HepG2 (cell line): ENCODE measurements at regions of chr6 and their contacts with region 1.

Region 1: DNA sequence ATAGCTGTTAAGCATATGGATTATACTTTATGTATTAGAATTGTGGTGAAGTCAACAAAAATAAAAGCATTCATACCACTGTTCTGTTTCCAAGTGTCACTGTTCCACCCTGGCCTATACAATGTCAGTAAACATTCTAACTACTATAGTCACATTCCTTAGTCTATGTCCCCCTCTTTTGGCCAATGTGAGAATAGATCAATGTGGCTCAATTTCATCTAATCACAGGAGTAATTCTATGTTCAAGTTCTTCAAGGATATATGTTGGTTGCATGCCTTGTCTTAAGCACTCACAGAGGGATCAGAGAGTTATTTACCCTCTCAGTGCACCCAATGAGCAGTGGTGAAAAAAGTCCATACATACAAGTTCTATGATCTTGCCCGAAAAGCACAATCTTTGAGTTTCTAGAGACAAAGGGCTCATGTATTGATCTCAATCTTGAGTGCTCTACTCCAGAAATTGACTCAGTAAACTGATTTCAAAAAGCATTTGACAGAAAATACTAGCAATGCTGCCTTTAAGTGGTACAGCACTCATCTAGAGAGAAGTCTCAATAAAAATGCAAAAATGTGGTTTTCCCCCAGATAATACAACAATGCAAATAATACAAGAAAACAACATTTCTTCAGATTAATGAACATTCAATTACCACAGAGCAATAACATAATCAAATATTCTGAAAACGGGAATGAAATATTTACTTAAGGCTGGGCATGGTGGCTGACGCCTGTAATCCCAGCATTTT is 16.5 kb downstream of the SMLR1 start:
- DNase-seq: peak; percentile 74
- ATAC-seq: peak; percentile 79
- H3K4me3 ChIP-seq: no peak overlapping the region
- H3K27ac ChIP-seq: no peak overlapping the region
- H3K4me1 ChIP-seq: peaks cover 23% of the 10 kb centered on the region
- H3K27me3 ChIP-seq: no peaks in the 10 kb centered on the region
- CTCF ChIP-seq: peak; percentile 91
- EP300 ChIP-seq: no peak
- POLR2A ChIP-seq: 0 out of 4 replicates have a peak, but pooled peaks of 1 of the 2 experiments have one; percentile 18
- RAD21 ChIP-seq: peak; percentile 89

Region 2: GRCh38 chr6:130293800-130294199 is 549.9 kb before region 1 on chr6:
- CTCF ChIA-PET with region 1: no interaction called
- POLR2A ChIA-PET with region 1: no interaction called
- in situ Hi-C with region 1: no loop called
- intact Hi-C with region 1: loop called (anchors 10 kb)
- DNase-seq: peak; percentile 23
- ATAC-seq: peak; percentile 89
- H3K4me3 ChIP-seq: no peak overlapping the region
- H3K27ac ChIP-seq: no peak overlapping the region
- H3K4me1 ChIP-seq: no peaks in the 10 kb centered on the region
- H3K27me3 ChIP-seq: no peaks in the 10 kb centered on the region
- CTCF ChIP-seq: peak; percentile 61
- EP300 ChIP-seq: no peak
- POLR2A ChIP-seq: no peak
- RAD21 ChIP-seq: no peak

Region 3: DNA sequence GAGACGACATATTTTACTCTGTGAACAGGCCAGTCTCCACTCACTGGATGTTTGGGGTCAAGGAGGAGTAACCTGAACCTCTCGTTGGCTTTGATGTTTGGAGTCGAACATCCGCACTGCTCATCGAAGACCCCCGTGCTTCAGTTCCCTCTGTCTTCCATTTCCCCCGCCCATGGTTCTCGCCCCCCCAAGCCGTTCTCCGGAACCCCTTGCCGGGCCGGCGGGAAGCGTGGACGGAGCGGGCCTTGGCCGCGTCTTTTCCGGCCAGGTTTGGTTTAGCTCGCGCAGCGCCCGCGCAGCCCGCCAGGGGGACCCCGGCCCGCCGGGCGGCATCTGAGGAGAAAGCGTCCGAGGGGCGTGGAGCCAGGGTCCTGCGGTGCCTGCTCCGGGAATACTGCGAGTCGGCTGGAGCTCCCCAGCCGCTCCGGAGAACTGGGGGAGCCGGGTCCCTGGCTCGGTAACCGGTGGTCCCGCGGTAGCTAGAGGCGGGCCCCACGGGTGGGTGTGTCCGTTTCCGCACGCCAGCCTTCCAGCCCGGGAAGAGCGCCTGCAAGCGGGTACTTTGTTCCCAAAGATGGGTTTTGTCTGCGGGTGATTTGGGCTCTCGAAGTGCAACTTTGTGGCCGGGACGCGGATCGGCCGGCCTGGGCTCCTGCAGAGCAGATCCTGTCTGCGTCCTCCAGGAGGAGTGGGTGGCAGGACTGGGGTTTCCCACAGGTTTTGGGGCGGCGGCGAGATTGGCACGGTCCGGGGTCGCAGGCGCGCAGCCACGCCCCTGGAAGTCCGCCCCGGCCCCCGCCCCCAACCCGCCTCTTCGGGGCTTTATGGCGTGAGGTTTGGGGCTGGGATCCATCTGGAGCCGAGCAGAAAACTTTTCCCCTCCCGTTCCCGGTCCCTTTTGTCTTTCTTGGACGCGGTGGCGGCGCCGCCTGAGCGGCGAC is 478.3 kb before region 1 on chr6 and contains the start of gene TMEM200A:
- CTCF ChIA-PET with region 1: interaction called, 16 read pairs
- POLR2A ChIA-PET with region 1: no interaction called
- in situ Hi-C with region 1: loop called (anchors 10 kb)
- intact Hi-C with region 1: loop called (anchors 1 kb)
- DNase-seq: peak; percentile 40
- ATAC-seq: peak; percentile 95
- H3K4me3 ChIP-seq: peak within 1 kb of the TSS; percentile 55 to 73 (median 56)
- H3K27ac ChIP-seq: no peak within 1 kb of the TSS
- H3K4me1 ChIP-seq: peaks cover 9% of the 10 kb centered on the region
- H3K27me3 ChIP-seq: peaks cover 2 to 34% of the 10 kb centered on the region in 2 experiments; a peak in 4 of 5 replicates
- CTCF ChIP-seq: peak; percentile 84
- EP300 ChIP-seq: no peak
- POLR2A ChIP-seq: no peak
- RAD21 ChIP-seq: peak; percentile 85
- total RNA-seq, gene TMEM200A: not detected in 2 replicates

Region 4: DNA sequence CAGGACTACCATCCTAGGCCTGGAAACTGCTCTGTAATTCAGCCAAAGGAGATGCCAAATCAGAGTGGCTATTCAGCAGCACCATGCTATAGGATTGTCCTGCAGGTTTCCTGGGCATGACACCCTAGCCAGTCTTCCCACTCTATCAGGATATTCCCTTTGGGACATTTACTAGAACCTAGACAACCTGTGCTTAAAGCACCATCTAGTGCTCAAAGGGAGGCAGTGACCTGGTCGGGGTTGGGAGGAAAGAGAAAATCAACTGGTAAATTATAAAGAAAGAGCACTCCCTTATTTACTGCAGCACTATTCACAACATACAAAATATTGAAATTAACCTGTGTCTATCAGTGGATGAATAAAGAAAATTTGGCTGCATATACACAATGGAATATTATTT is 83.7 kb before region 1 on chr6:
- CTCF ChIA-PET with region 1: no interaction called
- POLR2A ChIA-PET with region 1: no interaction called
- in situ Hi-C with region 1: no loop called
- intact Hi-C with region 1: loop called (anchors 1 kb)
- DNase-seq: peak; percentile 64
- ATAC-seq: peak; percentile 99
- H3K4me3 ChIP-seq: no peak overlapping the region
- H3K27ac ChIP-seq: no peak overlapping the region
- H3K4me1 ChIP-seq: no peaks in the 10 kb centered on the region
- H3K27me3 ChIP-seq: peaks cover 0 to 14% of the 10 kb centered on the region in 2 experiments; a peak in 2 of 5 replicates
- CTCF ChIP-seq: peak; percentile 77
- EP300 ChIP-seq: no peak
- POLR2A ChIP-seq: no peak
- RAD21 ChIP-seq: peak; percentile 79

Region 5: DNA sequence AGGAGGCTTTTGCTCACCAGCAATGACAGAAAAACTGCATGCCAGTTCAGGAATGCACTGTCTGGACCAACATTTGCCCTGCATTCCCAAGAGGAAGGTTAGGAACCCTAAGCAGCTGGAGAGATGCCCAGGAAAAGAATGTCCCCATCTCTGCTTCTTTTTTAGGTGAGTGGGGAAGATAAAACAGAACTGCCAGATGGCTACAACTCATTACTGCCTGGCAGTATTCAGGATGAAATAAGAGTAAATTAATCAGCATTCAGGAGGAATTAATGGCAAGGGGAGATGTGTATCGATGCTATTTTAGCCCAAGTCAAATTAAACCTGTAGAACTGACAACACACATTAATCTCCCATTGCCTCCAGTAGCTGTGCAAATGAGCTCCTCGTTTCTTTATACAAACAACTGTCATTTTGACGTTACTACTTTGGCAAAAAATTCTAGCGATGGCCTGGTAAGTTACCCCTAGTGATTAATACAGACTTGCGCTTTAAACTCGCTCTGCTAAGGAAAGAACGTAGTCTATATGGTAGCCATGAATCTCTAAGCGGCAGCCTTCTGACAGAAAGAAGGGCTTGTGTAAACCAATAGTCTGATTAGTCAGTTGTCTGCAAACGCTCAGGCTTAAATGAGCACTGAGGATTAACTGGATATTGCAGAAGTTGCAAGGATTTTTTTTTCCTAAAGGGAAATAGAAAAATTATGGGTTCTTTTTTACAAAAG is 33.3 kb before region 1 on chr6:
- CTCF ChIA-PET with region 1: no interaction called
- POLR2A ChIA-PET with region 1: interaction called, 6 read pairs
- in situ Hi-C with region 1: no loop called
- intact Hi-C with region 1: loop called (anchors 2 kb)
- DNase-seq: no peak
- ATAC-seq: peak; percentile 26; the same call in 2 of the 3 replicates
- H3K4me3 ChIP-seq: no peak overlapping the region
- H3K27ac ChIP-seq: no peak overlapping the region
- H3K4me1 ChIP-seq: peaks cover 44% of the 10 kb centered on the region
- H3K27me3 ChIP-seq: no peaks in the 10 kb centered on the region
- CTCF ChIP-seq: no peak
- EP300 ChIP-seq: no peak
- POLR2A ChIP-seq: no peak
- RAD21 ChIP-seq: no peak

Region 6: DNA sequence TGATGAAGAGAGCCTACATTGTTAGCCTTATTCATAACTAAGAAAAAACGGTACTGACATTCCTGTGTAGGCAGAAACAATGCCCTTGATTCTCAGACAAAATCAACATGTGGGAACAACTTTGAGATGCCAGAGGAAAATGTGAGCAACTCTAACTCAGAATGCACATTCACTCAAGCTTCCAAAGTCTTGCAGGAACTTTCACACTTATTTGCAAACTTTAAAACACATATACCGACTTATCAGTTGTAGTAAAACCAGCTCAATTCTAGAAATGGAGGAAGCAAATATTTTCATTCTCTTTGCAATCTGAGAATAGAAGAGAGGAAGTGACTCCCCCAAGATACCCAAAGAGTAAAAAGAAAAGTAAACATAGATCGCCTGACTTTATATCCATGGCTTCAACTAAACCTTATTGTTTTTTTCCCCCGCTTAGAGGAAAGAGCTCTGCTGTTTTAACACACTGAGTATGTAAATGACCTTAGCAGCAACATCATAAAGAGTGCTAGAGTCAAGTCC is 101.7 kb after region 1 on chr6:
- CTCF ChIA-PET with region 1: no interaction called
- POLR2A ChIA-PET with region 1: no interaction called
- in situ Hi-C with region 1: no loop called
- intact Hi-C with region 1: no loop called
- DNase-seq: peak; percentile 85
- ATAC-seq: peak; percentile 53
- H3K4me3 ChIP-seq: no peak overlapping the region
- H3K27ac ChIP-seq: peak overlapping the region; percentile 50
- H3K4me1 ChIP-seq: peaks cover 54% of the 10 kb centered on the region
- H3K27me3 ChIP-seq: no peaks in the 10 kb centered on the region
- CTCF ChIP-seq: no peak
- EP300 ChIP-seq: peak in 1 of 2 experiments; percentile 24; a peak in 2 of 4 replicates
- POLR2A ChIP-seq: no peak
- RAD21 ChIP-seq: no peak